ENCODE measurements at regions of chr1 and their contacts with region 1.

Region 1: DNA sequence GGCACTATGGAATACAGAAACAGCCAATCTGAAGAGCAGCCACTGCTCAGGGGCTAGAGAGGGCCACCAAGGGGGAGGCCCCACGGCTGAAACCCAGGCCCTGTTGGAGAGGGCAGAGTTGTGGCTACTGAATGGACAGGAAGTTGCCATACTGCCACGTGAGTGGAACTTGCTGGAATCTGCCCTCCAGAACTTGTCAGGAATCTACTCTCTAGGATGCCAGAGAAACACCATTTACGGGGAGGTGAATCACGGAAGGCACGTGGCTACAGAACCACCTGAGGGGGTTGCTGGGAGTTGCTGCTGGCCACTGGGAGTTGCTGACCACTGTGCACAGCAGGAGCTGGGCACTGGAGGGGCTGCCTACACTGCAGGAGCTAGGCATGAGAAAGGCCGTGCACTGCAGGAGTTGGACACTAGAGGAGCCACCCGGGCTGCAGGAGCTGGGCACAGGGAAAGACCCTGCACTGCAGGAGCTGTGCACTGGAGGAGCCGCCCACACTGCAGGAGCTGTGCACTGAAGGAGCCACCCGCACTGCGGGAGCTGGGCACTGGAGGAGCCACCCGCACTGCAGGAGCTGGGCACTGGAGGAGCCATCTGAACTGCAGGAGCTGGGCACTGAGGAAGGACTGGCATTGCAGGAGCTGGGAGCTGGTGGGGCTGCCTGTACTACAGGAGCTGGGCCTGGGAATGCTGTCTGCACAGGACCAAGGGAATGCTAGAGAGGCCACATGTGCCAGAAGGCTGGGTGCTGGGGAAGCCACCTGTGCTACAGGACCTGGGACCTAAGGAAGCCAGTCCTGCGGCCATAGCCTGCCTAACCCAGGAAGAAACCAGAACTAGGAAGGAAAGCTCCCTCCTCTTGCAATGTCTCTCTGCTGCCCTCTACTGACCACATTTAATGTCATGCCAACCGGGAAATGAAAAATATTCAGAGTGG is 343.4 kb downstream of the MATN1 start:
- DNase-seq: peak; percentile 85
- H3K4me3 ChIP-seq: peak overlapping the region in 1 of 2 experiments; percentile 28; a peak in 1 of 4 replicates
- H3K27ac ChIP-seq: peak overlapping the region in 1 of 2 experiments; percentile 30; a peak in 1 of 4 replicates
- H3K4me1 ChIP-seq: peaks cover 11 to 36% of the 10 kb centered on the region in 2 experiments; a peak in 3 of 4 replicates
- H3K27me3 ChIP-seq: no peaks in the 10 kb centered on the region
- CTCF ChIP-seq: peak; percentile 78
- EP300 ChIP-seq: no peak
- RAD21 ChIP-seq: peak; percentile 86

Region 2: DNA sequence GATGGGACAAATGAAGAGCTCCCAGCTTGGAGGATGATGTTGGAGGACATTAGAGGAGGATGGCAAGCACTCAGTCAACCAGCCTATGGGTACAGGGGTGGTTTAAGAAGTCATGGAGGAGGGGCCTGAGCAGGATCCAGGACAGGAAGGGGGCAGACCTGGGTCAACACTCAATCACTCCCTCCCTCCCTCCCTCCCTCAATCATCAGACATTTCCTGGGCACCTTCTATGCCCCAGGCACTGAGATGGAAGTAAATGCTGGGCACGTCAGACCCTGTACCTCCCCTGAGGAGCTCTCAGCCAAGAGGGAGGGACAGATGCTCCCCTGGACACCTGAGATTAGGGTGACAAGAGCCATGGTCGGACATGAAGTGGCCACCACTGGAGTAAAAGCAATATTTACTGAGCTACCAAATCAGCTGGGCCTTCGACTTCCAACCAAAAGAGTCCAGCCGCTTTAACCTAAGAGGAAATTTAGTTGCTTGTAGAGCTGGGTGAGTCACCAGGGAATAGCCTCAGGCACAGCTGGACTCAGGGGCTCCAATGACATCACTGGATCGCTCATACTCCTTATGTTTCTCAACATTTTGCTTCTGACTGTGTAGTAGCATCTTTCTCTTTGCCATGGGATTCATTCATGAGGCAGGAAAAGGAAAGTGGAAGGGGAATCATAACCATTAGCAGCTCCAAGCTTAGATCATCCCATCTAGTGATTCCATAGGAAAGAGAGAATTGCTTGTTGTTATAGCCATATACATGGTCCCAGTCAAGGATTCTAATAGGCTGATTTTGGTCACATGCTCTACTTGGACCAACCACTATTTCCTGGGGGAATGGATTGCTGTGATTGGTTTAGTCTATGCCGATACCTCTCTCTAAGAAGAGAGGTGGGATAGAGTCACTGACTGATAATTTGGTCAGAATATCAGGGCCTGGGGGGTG is 321.1 kb before region 1 on chr1:
- CTCF ChIA-PET with region 1: no interaction called
- POLR2A ChIA-PET with region 1: no interaction called
- DNase-seq: no peak
- H3K4me3 ChIP-seq: no peak overlapping the region
- H3K27ac ChIP-seq: no peak overlapping the region
- H3K4me1 ChIP-seq: peaks cover 2 to 5% of the 10 kb centered on the region in 2 experiments; a peak in 2 of 4 replicates
- H3K27me3 ChIP-seq: no peaks in the 10 kb centered on the region; the same call in 1 of the 2 replicates
- CTCF ChIP-seq: no peak
- EP300 ChIP-seq: no peak
- RAD21 ChIP-seq: no peak

Region 3: GRCh38 chr1:30085811-30086770 is 293.9 kb before region 1 on chr1:
- CTCF ChIA-PET with region 1: interaction called, 20 read pairs
- POLR2A ChIA-PET with region 1: no interaction called
- DNase-seq: peak; percentile 93
- H3K4me3 ChIP-seq: peak overlapping the region; percentile 39 to 58
- H3K27ac ChIP-seq: peak overlapping the region in 1 of 2 experiments; percentile 31; a peak in 1 of 4 replicates
- H3K4me1 ChIP-seq: peaks cover 35 to 46% of the 10 kb centered on the region in 2 experiments; a peak in 3 of 4 replicates
- H3K27me3 ChIP-seq: no peaks in the 10 kb centered on the region
- CTCF ChIP-seq: peak; percentile 87
- EP300 ChIP-seq: no peak
- RAD21 ChIP-seq: peak; percentile 77

Region 4: GRCh38 chr1:30184393-30185141 is 195.4 kb before region 1 on chr1:
- CTCF ChIA-PET with region 1: interaction called, 23 read pairs
- POLR2A ChIA-PET with region 1: no interaction called
- DNase-seq: peak; percentile 58
- H3K4me3 ChIP-seq: no peak overlapping the region
- H3K27ac ChIP-seq: no peak overlapping the region
- H3K4me1 ChIP-seq: peaks cover 0 to 26% of the 10 kb centered on the region in 2 experiments; a peak in 2 of 4 replicates
- H3K27me3 ChIP-seq: no peaks in the 10 kb centered on the region
- CTCF ChIP-seq: no peak
- EP300 ChIP-seq: peak in 1 of 2 experiments; percentile 78; a peak in 2 of 4 replicates
- RAD21 ChIP-seq: no peak; the same call in 1 of the 2 replicates

Region 5: GRCh38 chr1:30336550-30337323 is 43.2 kb before region 1 on chr1:
- CTCF ChIA-PET with region 1: interaction called, 18 read pairs
- POLR2A ChIA-PET with region 1: no interaction called
- DNase-seq: no peak
- H3K4me3 ChIP-seq: no peak overlapping the region
- H3K27ac ChIP-seq: no peak overlapping the region
- H3K4me1 ChIP-seq: peaks cover 0 to 7% of the 10 kb centered on the region in 2 experiments; a peak in 1 of 4 replicates
- H3K27me3 ChIP-seq: no peaks in the 10 kb centered on the region
- CTCF ChIP-seq: no peak
- EP300 ChIP-seq: no peak
- RAD21 ChIP-seq: no peak

Region 6: GRCh38 chr1:30366911-30367310 is 13.0 kb before region 1 on chr1:
- CTCF ChIA-PET with region 1: interaction called, 75 read pairs
- POLR2A ChIA-PET with region 1: no interaction called
- DNase-seq: no peak
- H3K4me3 ChIP-seq: no peak overlapping the region
- H3K27ac ChIP-seq: no peak overlapping the region
- H3K4me1 ChIP-seq: no peaks in the 10 kb centered on the region; a peak in 1 of 4 replicates
- H3K27me3 ChIP-seq: no peaks in the 10 kb centered on the region
- CTCF ChIP-seq: no peak
- EP300 ChIP-seq: no peak
- RAD21 ChIP-seq: no peak

Region 7: DNA sequence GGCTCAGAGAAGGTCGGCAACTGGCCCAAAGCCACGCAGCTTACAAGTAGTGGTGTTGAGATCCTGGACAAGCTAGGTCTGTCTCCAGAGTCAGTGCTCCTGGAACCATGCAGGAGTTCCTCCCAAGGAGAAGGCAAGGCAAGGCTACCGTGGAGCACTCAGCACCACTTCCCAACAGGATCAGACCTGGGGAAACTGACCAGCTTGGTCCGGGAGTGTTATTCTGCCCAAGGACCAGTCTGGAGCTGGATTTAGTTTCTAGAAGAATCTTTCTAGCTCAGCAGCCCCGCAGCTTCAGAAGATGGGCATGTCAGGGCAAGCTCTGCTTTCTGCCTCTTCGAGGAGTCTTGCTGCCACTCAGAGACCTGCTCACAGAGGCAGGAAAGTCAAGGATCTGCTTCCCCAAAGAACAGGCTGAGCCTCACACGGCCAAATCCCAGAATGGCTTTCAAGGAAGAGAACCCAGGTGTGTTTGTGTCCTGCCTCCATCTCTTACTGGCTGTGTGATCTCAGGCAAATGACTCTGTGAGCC is 40.6 kb after region 1 on chr1:
- CTCF ChIA-PET with region 1: interaction called, 12 read pairs
- POLR2A ChIA-PET with region 1: interaction called, 3 read pairs
- DNase-seq: no peak
- H3K4me3 ChIP-seq: no peak overlapping the region
- H3K27ac ChIP-seq: no peak overlapping the region
- H3K4me1 ChIP-seq: no peaks in the 10 kb centered on the region; a peak in 1 of 4 replicates
- H3K27me3 ChIP-seq: no peaks in the 10 kb centered on the region
- CTCF ChIP-seq: no peak
- EP300 ChIP-seq: no peak
- RAD21 ChIP-seq: no peak

Region 8: GRCh38 chr1:30444401-30444800 is 64.4 kb after region 1 on chr1:
- CTCF ChIA-PET with region 1: no interaction called
- POLR2A ChIA-PET with region 1: no interaction called
- DNase-seq: no peak
- H3K4me3 ChIP-seq: no peak overlapping the region
- H3K27ac ChIP-seq: no peak overlapping the region
- H3K4me1 ChIP-seq: no peaks in the 10 kb centered on the region
- H3K27me3 ChIP-seq: no peaks in the 10 kb centered on the region
- CTCF ChIP-seq: no peak
- EP300 ChIP-seq: no peak
- RAD21 ChIP-seq: no peak